ENCODE measurements at regions of chr3 and their contacts with region 1.

Region 1: DNA sequence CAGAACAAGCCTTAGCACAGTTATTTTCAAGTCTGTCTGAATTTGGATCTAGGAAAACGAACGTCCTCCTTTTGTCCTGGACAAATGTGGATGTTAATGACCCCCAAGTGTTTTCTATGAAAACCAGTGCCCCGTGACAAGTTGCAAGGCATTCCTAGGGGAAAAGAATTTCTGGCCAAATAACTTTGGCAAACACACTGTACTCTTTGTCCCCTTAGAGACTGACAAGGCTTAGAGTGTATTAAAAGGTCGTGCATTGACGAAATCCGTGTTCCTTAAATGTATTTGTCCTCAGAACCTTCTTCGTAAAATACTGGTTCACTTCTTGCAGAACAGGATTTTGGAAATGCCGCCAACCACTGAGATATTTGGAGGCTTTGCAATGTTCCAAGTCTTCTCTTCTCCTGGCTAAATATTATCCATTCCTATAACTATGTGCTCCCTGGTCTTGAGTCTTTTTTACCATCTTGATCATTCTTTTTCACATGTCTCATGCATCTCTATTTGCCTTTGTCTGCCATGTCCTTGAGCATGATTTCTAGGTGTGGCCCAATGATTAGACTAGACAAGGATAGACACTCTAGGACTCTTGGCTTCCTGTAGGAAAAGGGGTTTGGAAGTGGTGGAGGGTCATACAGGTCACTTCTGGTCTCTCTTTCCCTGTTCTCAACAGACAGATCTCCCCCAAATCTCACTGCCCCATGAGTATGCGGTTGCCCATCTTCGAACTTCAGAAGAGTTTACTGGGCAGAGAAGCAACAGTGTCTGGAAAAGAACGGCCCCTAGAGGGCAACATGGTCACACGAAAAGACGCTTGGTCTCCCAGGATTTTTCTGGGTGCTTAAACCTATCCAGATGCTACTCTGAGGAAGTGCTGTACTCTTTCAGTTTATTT is 117.5 kb downstream of the EDEM1 start:
- DNase-seq: peak; percentile 55 to 76
- H3K4me3 ChIP-seq: no peak overlapping the region
- H3K4me3 Mint-ChIP-seq: peak overlapping the region; percentile 16
- H3K27ac Mint-ChIP-seq: peak overlapping the region; percentile 58
- H3K4me1 ChIP-seq: peaks cover 27% of the 10 kb centered on the region
- H3K4me1 Mint-ChIP-seq: peaks cover 18% of the 10 kb centered on the region
- H3K27me3 ChIP-seq: no peaks in the 10 kb centered on the region
- H3K27me3 Mint-ChIP-seq: no peaks in the 10 kb centered on the region
- CTCF ChIP-seq: peak; percentile 69 to 81

Region 2: DNA sequence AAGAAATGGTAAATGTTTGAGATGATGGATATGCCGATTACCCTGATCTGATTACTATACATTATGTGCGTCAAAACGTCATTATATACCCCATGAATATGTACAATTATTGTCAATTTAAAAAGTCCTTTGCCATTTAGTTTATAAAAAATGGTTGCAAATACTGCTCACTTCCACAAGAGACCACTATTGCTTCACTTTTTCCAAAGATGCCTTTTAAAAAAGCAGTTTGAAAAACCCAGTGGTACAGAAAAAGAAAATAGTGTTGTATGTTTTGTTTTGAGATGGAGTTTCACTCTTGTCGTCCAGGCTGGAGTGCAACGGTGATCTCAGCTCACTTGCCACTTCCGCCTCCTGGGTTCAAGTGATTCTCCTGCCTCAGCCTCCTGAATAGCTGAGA is 78.3 kb before region 1 on chr3:
- CTCF ChIA-PET with region 1: no interaction called
- POLR2A ChIA-PET with region 1: no interaction called
- intact Hi-C with region 1: loop called (anchors 2 kb)
- DNase-seq: no peak
- H3K4me3 ChIP-seq: no peak overlapping the region
- H3K4me3 Mint-ChIP-seq: no peak overlapping the region
- H3K27ac Mint-ChIP-seq: no peak overlapping the region
- H3K4me1 ChIP-seq: no peaks in the 10 kb centered on the region
- H3K4me1 Mint-ChIP-seq: peaks cover 6% of the 10 kb centered on the region
- H3K27me3 ChIP-seq: no peaks in the 10 kb centered on the region
- H3K27me3 Mint-ChIP-seq: no peaks in the 10 kb centered on the region
- CTCF ChIP-seq: peak in 1 of 2 experiments; percentile 45

Region 3: DNA sequence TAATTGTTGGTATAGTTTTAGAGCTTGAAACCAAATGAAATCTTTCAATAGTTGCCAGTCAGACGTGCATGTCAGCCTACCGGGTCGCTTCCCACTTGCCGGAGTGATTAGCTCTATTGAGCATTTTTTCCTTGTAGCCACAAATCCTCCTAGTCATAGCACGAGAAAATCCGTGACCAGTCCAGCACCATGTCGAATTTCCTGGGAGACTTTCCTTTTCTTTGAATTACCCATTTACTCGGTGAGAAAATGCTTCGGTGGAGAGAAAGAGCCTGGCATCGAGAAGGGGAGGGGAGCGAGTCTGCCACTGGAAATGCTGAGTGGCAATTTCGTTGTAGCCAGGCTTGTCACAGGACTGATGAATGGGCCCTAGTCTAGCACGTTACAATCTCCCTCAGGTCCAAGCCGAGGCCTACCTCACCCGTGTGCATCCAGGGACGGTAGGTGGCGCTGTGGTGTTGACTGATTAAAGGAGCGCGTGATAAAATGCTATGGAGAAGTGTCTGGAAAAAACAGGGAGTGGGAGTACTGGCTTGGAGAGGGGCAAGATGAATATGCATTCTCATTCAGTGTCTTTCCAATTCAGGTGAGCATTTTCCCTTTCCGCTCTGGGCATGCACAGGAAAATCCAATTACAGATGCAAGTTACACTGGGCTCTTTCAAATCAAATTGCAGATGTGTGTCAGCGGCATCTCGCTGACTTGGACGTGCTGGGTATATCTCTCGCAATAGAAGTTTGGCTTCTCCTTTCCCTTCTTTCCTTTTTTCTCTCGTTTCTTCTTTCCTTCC is 121.3 kb after region 1 on chr3:
- CTCF ChIA-PET with region 1: no interaction called
- POLR2A ChIA-PET with region 1: no interaction called
- intact Hi-C with region 1: loop called (anchors 2 kb)
- DNase-seq: peak; percentile 70 to 74
- H3K4me3 ChIP-seq: no peak overlapping the region
- H3K4me3 Mint-ChIP-seq: no peak overlapping the region
- H3K27ac Mint-ChIP-seq: no peak overlapping the region
- H3K4me1 ChIP-seq: no peaks in the 10 kb centered on the region
- H3K4me1 Mint-ChIP-seq: no peaks in the 10 kb centered on the region
- H3K27me3 ChIP-seq: no peaks in the 10 kb centered on the region
- H3K27me3 Mint-ChIP-seq: no peaks in the 10 kb centered on the region
- CTCF ChIP-seq: peak; percentile 66 to 72

Region 4: GRCh38 chr3:5607581-5607980 is 302.5 kb after region 1 on chr3:
- CTCF ChIA-PET with region 1: no interaction called
- POLR2A ChIA-PET with region 1: no interaction called
- intact Hi-C with region 1: loop called (anchors 1 kb)
- DNase-seq: no peak
- H3K4me3 ChIP-seq: no peak overlapping the region
- H3K4me3 Mint-ChIP-seq: no peak overlapping the region
- H3K27ac Mint-ChIP-seq: no peak overlapping the region
- H3K4me1 ChIP-seq: no peaks in the 10 kb centered on the region
- H3K4me1 Mint-ChIP-seq: no peaks in the 10 kb centered on the region
- H3K27me3 ChIP-seq: no peaks in the 10 kb centered on the region
- H3K27me3 Mint-ChIP-seq: peaks cover 7% of the 10 kb centered on the region
- CTCF ChIP-seq: no peak

Region 5: GRCh38 chr3:5806192-5806591 is 501.2 kb after region 1 on chr3:
- CTCF ChIA-PET with region 1: no interaction called
- POLR2A ChIA-PET with region 1: no interaction called
- intact Hi-C with region 1: loop called (anchors 5 kb)
- DNase-seq: peak in 1 of 2 experiments; percentile 8
- H3K4me3 ChIP-seq: no peak overlapping the region
- H3K4me3 Mint-ChIP-seq: no peak overlapping the region
- H3K27ac Mint-ChIP-seq: no peak overlapping the region
- H3K4me1 ChIP-seq: no peaks in the 10 kb centered on the region
- H3K4me1 Mint-ChIP-seq: no peaks in the 10 kb centered on the region
- H3K27me3 ChIP-seq: no peaks in the 10 kb centered on the region
- H3K27me3 Mint-ChIP-seq: peaks cover 4% of the 10 kb centered on the region
- CTCF ChIP-seq: peak; percentile 45 to 55

Measured in Caco-2 (cell line).